K562 (cell line): ENCODE measurements at regions of chr11 and their contacts with region 1.

Region 1: DNA sequence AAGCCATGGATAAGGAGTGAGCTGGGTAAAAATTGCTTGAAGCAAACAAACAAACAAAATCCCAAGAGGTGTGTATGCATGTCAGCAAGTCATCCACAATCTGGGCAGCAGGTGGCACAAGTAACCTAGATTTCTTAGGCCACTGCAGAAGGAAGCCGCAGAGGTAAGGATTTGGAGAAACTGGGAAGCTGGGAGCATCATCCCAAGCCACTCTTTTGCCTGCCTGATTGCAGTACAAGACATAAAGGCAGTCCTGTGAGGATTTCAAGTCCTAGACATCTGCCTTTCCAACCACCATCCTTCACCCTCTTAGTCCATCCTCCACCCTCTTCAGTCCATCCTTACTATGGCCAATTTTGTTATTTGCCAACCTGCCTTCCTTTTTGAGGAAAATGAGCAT is 67.2 kb upstream of the BMAL1 start:
- DNase-seq: peak; percentile 16 to 21 (median 18)
- ATAC-seq: peak; percentile 62; the same call in 2 of the 3 replicates
- H3K4me3 ChIP-seq: no peak overlapping the region
- H3K27ac ChIP-seq: no peak overlapping the region
- H3K4me1 ChIP-seq: peaks cover 5 to 7% of the 10 kb centered on the region in 2 experiments; a peak in 2 of 5 replicates
- H3K27me3 ChIP-seq: peaks cover 15 to 28% of the 10 kb centered on the region in 2 experiments
- CTCF ChIP-seq: peak; percentile 39 to 58 (median 40); a peak in 5 of 6 replicates
- EP300 ChIP-seq: no peak
- POLR2A ChIP-seq: no peak
- RAD21 ChIP-seq: peak; percentile 68 to 72

Region 2: DNA sequence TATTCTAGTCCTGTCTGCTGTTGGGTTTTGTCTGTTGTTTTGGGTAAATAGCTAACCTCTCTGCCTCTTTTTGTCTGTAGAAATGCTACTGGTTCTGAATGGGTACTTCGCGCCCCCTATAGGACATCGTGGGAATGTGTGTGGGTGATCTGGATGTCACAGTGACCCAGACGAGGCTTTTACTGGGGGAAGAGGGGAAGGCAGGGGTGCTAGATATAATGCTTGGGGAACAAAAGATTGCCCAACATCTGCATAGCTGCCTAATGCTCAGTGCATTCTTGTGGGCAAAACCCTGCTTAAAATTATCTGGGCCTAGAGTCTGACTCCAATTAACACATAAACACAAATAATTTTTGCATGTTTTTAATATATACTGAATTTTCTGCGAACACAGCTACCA is 124.9 kb after region 1 on chr11:
- CTCF ChIA-PET with region 1: no interaction called
- POLR2A ChIA-PET with region 1: no interaction called
- in situ Hi-C with region 1: loop called (anchors 10 kb)
- intact Hi-C with region 1: loop called (anchors 2 kb)
- DNase-seq: peak; percentile 64 to 69 (median 66)
- ATAC-seq: peak; percentile 82
- H3K4me3 ChIP-seq: no peak overlapping the region
- H3K27ac ChIP-seq: no peak overlapping the region
- H3K4me1 ChIP-seq: peaks cover 0 to 7% of the 10 kb centered on the region in 2 experiments; a peak in 1 of 5 replicates
- H3K27me3 ChIP-seq: peaks cover 8 to 38% of the 10 kb centered on the region in 2 experiments; a peak in 4 of 5 replicates
- CTCF ChIP-seq: peak; percentile 69 to 82 (median 78)
- EP300 ChIP-seq: no peak
- POLR2A ChIP-seq: no peak
- RAD21 ChIP-seq: peak; percentile 60 to 67